ENCODE measurements at regions of chr6 and their contacts with region 1.

Region 1: GRCh38 chr6:132199343-132199742 is 201.9 kb downstream of the MOXD1 start:
- DNase-seq: peak; percentile 90
- ATAC-seq: peak; percentile 59
- H3K4me3 ChIP-seq: peak overlapping the region; percentile 17; the same call in 1 of the 2 replicates
- H3K27ac ChIP-seq: no peak overlapping the region
- H3K4me1 ChIP-seq: peaks cover 8% of the 10 kb centered on the region
- H3K27me3 ChIP-seq: no peaks in the 10 kb centered on the region
- CTCF ChIP-seq: no peak
- POLR2A ChIP-seq: no peak
- RAD21 ChIP-seq: no peak

Region 2: DNA sequence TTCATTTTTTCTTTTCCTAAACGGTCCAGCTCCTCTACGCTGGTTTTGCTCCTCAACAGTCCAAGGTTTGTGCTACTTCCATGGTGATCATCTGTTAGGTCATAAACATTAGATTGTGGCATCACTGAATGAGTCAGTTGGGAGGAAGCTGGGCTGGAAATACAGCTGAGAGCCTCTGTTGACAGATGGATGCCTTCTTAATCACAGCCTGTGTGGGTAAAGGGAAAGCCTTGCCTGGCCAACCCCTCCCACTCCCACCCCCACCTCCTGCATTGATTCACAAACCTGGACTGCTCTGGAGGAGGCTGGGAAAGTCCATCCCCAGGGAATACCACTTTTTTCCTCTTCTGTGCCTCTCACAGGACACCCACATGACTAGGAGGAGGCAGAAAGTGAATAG is 67.6 kb before region 1 on chr6:
- CTCF ChIA-PET with region 1: no interaction called
- POLR2A ChIA-PET with region 1: no interaction called
- dilution Hi-C with region 1: no loop called
- in situ Hi-C with region 1: no loop called
- intact Hi-C with region 1: loop called (anchors 5 kb)
- DNase-seq: peak; percentile 100
- ATAC-seq: peak; percentile 80
- H3K4me3 ChIP-seq: no peak overlapping the region
- H3K27ac ChIP-seq: peak overlapping the region; percentile 96; the same call in 1 of the 2 replicates
- H3K4me1 ChIP-seq: peaks cover 26% of the 10 kb centered on the region
- H3K27me3 ChIP-seq: no peaks in the 10 kb centered on the region
- CTCF ChIP-seq: no peak
- POLR2A ChIP-seq: peak; percentile 60
- RAD21 ChIP-seq: no peak; the same call in 1 of the 2 replicates